ENCODE measurements at regions of chr9 and their contacts with region 1.

Region 1: GRCh38 chr9:37485389-37486219 is at the start of gene POLR1E:
- DNase-seq: peak; percentile 92 to 97 (median 96)
- ATAC-seq: peak; percentile 94 to 98 (median 98)
- H3K4me3 ChIP-seq: peak within 1 kb of the TSS; percentile 36 to 84 (median 70)
- H3K27ac ChIP-seq: peak within 1 kb of the TSS in 11 of 12 donors; percentile 6 to 87 (median 78)
- H3K4me1 ChIP-seq: peaks cover 5 to 30% (median 26%) of the 10 kb centered on the region in 12 donors
- H3K27me3 ChIP-seq: peaks cover 0 to 10% (median 0%) of the 10 kb centered on the region in 9 donors
- CTCF ChIP-seq: no peak
- POLR2A ChIP-seq: peak in 1 of 2 donors; percentile 76
- total RNA-seq, gene POLR1E: 11.2 to 24.8 (median 12.8) TPM

Region 2: GRCh38 chr9:37422289-37423104 is 63.1 kb before region 1 on chr9 and contains the start of gene GRHPR:
- intact Hi-C with region 1: loop called in 2 of 10 experiments (anchors 5 kb)
- DNase-seq: peak; percentile 91 to 96 (median 94)
- ATAC-seq: peak; percentile 93 to 99 (median 98)
- H3K4me3 ChIP-seq: peak within 1 kb of the TSS; percentile 61 to 98 (median 83)
- H3K27ac ChIP-seq: peak within 1 kb of the TSS; percentile 61 to 96 (median 89)
- H3K4me1 ChIP-seq: peaks cover 0 to 33% (median 28%) of the 10 kb centered on the region in 12 donors
- H3K27me3 ChIP-seq: no peaks in the 10 kb centered on the region
- CTCF ChIP-seq: no peak
- POLR2A ChIP-seq: peak in 1 of 2 donors; percentile 88
- total RNA-seq, gene GRHPR: 94.9 to 209 (median 111) TPM

Region 3: DNA sequence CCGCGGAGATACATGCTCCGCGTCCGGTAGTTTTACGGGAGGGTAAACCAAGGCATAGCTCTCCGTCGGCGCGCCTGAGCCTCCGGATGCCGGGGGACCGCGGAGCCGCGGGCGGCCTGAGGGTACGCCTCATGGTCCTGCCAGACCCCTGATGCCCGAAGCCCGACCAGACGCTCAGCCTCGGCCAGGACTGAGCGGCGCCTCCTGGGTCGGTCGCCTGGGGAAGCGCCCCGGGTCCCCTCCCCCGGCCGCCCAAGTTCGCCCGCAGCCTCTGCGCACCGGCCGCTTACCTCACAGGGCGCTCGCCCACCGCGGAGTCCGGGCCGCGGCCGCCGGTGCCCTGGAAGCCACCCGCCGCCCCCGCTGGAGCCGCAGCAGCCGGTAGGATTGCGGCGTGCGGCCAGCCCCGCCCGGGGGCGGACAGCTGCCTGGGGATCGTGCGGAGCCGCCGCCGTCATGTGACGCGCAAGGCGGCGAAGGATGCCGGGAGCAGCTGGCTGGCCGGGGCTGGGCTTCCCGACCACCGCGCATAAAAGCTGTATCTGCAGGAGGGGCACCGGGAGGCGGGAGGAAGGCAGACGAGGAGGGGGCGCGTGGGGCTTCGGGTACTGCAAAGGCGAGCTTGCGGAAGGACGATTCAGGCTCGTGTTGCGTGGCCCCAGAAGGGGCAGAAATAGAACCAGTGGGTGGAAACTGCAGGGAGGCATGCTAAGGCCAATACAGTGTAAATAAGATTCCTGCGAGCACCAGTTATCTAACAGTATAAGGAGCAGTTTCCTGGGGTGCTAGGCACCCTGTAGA is 90.5 kb after region 1 on chr9 and contains the start of gene FBXO10:
- intact Hi-C with region 1: loop called in 6 of 10 experiments (anchors 2 to 10 kb)
- DNase-seq: peak; percentile 69 to 86 (median 78)
- ATAC-seq: peak; percentile 81 to 97 (median 95)
- H3K4me3 ChIP-seq: peak within 1 kb of the TSS; percentile 68 to 98 (median 82)
- H3K27ac ChIP-seq: peak within 1 kb of the TSS; percentile 27 to 90 (median 80)
- H3K4me1 ChIP-seq: peaks cover 0 to 24% (median 18%) of the 10 kb centered on the region in 12 donors
- H3K27me3 ChIP-seq: no peaks in the 10 kb centered on the region
- CTCF ChIP-seq: peak in 1 of 12 donors; percentile 4
- POLR2A ChIP-seq: peak in 1 of 2 donors; percentile 64
- total RNA-seq, gene FBXO10: 5.5 to 9.8 (median 7.3) TPM

Region 4: GRCh38 chr9:37746848-37747753 is 261.5 kb after region 1 on chr9:
- intact Hi-C with region 1: loop called in 2 of 10 experiments (anchors 10 kb)
- DNase-seq: peak in 2 of 5 donors; percentile 39 to 49
- ATAC-seq: peak in 3 of 4 donors; percentile 77 to 88 (median 78)
- H3K4me3 ChIP-seq: no peak overlapping the region
- H3K27ac ChIP-seq: no peak overlapping the region
- H3K4me1 ChIP-seq: no peaks in the 10 kb centered on the region
- H3K27me3 ChIP-seq: no peaks in the 10 kb centered on the region
- CTCF ChIP-seq: peak; percentile 76 to 94 (median 84)
- POLR2A ChIP-seq: no peak

Region 5: GRCh38 chr9:38432922-38433510 is 947.4 kb after region 1 on chr9:
- intact Hi-C with region 1: loop called in 1 of 10 experiments (anchors 10 kb)
- DNase-seq: no peak
- ATAC-seq: peak in 1 of 4 donors; percentile 19
- H3K4me3 ChIP-seq: no peak overlapping the region
- H3K27ac ChIP-seq: no peak overlapping the region
- H3K4me1 ChIP-seq: no peaks in the 10 kb centered on the region
- H3K27me3 ChIP-seq: peaks cover 0 to 19% (median 0%) of the 10 kb centered on the region in 9 donors
- CTCF ChIP-seq: peak; percentile 26 to 67 (median 54)
- POLR2A ChIP-seq: no peak

Measured in heart left ventricle (tissue), 16 donors.